Right ventricle myocardium superior (tissue), 1 donor: ENCODE measurements at regions of chr12 and their contacts with region 1.

Region 1: DNA sequence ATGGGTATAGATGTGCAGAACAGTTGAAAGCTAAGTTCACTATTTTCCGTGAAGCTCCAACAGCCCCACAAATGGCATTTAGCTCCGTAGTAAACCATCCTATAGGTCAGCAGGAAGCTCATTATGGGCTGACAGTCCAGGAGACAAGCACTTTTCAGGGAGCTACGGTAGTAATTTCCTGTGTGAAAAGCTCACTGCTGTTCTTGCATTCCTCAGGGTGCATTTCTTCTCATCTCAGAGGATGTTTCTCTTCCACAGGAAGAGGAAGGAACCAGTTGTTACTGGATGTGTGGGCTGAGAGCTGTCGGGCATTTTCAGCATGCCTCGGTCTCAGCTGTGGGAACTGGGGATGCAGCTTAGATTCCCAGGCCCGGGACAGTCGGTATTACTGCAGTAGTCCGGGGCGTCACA is 72.8 kb downstream of the GALNT4 start:
- DNase-seq: peak; percentile 55
- ATAC-seq: peak; percentile 66

Region 2: DNA sequence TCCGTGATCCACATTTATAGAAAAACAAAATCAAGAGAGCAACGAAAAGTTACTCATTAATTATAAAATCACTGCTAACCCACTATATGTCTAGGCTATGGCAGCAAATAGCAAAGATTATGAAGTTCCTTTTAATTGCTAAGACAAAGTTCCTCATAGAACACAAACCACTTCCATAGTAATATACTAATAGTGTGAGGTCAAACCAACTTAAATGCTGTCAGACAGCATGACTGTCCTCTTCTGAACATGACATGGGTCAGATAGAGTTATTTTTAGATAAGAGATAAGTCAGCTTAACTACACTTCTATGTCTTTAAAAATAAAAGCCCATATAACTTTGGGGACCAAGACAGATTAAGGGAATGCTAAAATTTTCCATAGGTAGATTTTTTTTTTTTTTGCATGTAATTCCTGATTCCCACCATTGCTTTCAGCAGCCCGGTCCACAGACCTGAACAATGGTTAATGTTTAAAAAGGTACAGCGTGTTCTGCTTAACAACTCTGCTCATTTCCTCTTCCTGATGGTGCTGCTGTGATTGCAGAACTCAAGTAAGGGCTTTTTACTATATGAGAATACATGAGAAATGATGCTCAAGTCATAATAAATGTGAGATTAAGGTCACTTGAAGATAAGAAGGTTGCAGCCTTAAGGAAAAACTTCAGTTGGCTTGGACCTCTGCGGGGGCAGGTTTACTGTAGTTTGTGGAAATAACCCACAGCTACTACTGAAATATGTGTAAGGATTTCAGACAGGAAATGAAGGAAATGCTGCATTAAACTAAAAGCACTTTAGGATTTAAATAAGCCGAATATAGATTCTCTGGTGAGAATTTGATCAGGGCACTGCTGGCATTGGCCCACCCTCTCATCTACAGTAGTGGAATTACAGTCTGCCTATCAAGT is 61.8 kb before region 1 on chr12:
- intact Hi-C with region 1: loop called (anchors 5 kb)
- DNase-seq: no peak
- ATAC-seq: peak; percentile 87

Region 3: GRCh38 chr12:89504560-89505346 is 52.9 kb after region 1 on chr12:
- intact Hi-C with region 1: no loop called
- DNase-seq: no peak
- ATAC-seq: no peak